CD4-positive, alpha-beta memory T cell (primary cell): ENCODE measurements at regions of chr6 and their contacts with region 1.

Region 1: DNA sequence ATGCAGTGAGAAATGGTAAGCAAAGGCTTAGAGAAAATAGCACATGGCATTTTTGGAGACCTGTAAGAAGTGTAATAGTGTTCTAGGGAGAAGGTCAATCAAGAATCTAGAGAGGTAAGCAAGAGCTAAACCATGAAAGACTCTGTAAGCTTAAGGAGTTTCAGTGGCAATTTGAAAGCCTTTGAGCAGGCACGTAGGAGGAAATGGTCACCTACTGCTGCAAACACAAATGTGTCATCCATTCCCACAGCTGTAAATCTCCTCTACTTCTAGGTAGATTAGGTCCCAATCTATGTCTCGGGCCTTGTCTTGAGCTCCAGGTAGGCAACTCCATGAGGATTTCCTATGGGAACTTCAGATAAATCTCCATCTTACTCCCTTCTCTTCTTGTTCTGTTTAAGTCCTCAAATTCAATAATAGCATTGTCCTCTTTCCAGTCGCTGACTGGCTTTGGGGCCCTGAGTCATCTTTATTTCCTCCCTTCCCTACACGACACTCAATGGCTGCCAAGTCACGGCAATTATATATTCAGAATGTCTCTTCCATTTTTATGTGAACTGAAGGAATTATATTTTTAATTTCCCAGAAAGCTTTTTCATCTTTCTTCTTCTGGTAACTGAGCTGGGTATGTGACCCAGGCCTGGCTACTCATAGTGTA is 24.2 kb upstream of the PAQR8 start:
- DNase-seq: no peak
- H3K4me3 ChIP-seq: no peak overlapping the region
- H3K4me3 Mint-ChIP-seq: peak overlapping the region in 1 of 8 donors; percentile 48
- H3K27ac ChIP-seq: no peak overlapping the region
- H3K27ac Mint-ChIP-seq: peak overlapping the region in 5 of 7 donors; percentile 38 to 86 (median 66)
- H3K4me1 ChIP-seq: peaks cover 60% of the 10 kb centered on the region
- H3K4me1 Mint-ChIP-seq: peaks cover 43 to 67% (median 53%) of the 10 kb centered on the region in 4 donors
- H3K27me3 ChIP-seq: no peaks in the 10 kb centered on the region
- H3K27me3 Mint-ChIP-seq: no peaks in the 10 kb centered on the region

Region 2: GRCh38 chr6:52304983-52305390 is 32.8 kb before region 1 on chr6:
- CTCF ChIA-PET with region 1: interaction called, 8 read pairs
- POLR2A ChIA-PET with region 1: interaction called, 27 read pairs
- intact Hi-C with region 1: no loop called
- DNase-seq: peak in 1 of 5 donors; percentile 22
- H3K4me3 ChIP-seq: peak overlapping the region in 1 of 2 donors; percentile 34
- H3K4me3 Mint-ChIP-seq: peak overlapping the region; percentile 73 to 92 (median 82)
- H3K27ac ChIP-seq: peak overlapping the region; percentile 59
- H3K27ac Mint-ChIP-seq: peak overlapping the region; percentile 88 to 96 (median 94)
- H3K4me1 ChIP-seq: peaks cover 73% of the 10 kb centered on the region
- H3K4me1 Mint-ChIP-seq: peaks cover 54 to 89% (median 71%) of the 10 kb centered on the region in 4 donors
- H3K27me3 ChIP-seq: no peaks in the 10 kb centered on the region
- H3K27me3 Mint-ChIP-seq: no peaks in the 10 kb centered on the region